ENCODE measurements at regions of chr7 and their contacts with region 1.

Region 1: GRCh38 chr7:112036071-112036470 is 170.1 kb downstream of the DOCK4 start:
- DNase-seq: peak; percentile 53
- ATAC-seq: peak; percentile 66
- H3K4me3 ChIP-seq: no peak overlapping the region
- H3K27ac ChIP-seq: no peak overlapping the region
- H3K4me1 ChIP-seq: peaks cover 6% of the 10 kb centered on the region
- H3K27me3 ChIP-seq: no peaks in the 10 kb centered on the region
- CTCF ChIP-seq: no peak
- POLR2A ChIP-seq: no peak
- RAD21 ChIP-seq: no peak

Region 2: DNA sequence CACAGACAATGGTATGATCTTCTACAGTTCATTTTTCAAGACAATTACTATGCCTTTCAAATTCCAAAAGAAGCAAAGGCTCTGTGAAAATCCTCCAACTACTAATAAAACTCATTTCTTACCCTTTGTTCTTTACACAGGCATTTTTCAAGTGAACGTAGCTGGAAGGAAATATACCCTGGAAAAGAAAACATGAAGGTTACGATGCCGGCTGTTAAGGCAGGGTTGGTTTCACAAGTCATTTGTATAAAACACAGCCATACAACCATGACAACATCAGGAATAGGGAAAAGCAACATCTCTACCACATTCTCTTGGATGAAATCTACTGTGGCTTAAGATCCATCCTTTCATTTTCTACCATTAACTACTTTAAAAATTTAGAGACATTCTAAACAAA is 37.7 kb before region 1 on chr7:
- CTCF ChIA-PET with region 1: no interaction called
- POLR2A ChIA-PET with region 1: no interaction called
- dilution Hi-C with region 1: no loop called
- in situ Hi-C with region 1: no loop called
- intact Hi-C with region 1: loop called (anchors 5 kb)
- DNase-seq: no peak
- ATAC-seq: no peak
- H3K4me3 ChIP-seq: no peak overlapping the region
- H3K27ac ChIP-seq: no peak overlapping the region
- H3K4me1 ChIP-seq: no peaks in the 10 kb centered on the region; the same call in 1 of the 2 replicates
- H3K27me3 ChIP-seq: no peaks in the 10 kb centered on the region
- CTCF ChIP-seq: no peak
- POLR2A ChIP-seq: no peak
- RAD21 ChIP-seq: no peak